HEK293 (cell line): ENCODE measurements at regions of chr3 and their contacts with region 1.

Region 1: GRCh38 chr3:172332256-172333041 is 115.8 kb downstream of the GHSR start:
- H3K4me3 ChIP-seq: no peak overlapping the region
- H3K27ac ChIP-seq: no peak overlapping the region
- H3K4me1 ChIP-seq: no peaks in the 10 kb centered on the region
- CTCF ChIP-seq: peak; percentile 32; the same call in 1 of the 2 replicates

Region 2: GRCh38 chr3:172307141-172307560 is 25.3 kb before region 1 on chr3:
- CTCF ChIA-PET with region 1: interaction called, 10 read pairs
- POLR2A ChIA-PET with region 1: no interaction called
- H3K4me3 ChIP-seq: no peak overlapping the region
- H3K27ac ChIP-seq: no peak overlapping the region
- H3K4me1 ChIP-seq: no peaks in the 10 kb centered on the region
- CTCF ChIP-seq: no peak

Region 3: DNA sequence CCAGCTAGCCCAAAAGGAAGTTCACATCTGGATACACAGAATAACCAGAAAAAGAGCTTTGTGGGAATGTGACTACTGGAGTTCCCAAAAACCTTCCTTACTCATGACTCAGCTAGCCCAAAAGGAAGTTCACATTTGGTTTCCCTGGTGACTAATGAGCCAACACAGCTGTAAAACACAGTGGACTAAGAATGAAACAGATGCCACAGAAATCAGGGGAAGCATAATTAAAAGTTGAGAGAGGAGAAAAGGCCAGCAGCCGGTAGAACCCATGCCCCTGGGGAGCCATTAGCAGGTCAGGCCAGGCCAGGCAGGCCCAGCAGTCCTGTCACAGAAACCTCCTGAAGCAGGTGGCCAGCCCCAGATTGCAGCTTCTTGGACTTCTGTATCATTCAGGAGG is 14.5 kb before region 1 on chr3:
- CTCF ChIA-PET with region 1: interaction called, 13 read pairs
- POLR2A ChIA-PET with region 1: no interaction called
- H3K4me3 ChIP-seq: no peak overlapping the region
- H3K27ac ChIP-seq: no peak overlapping the region
- H3K4me1 ChIP-seq: no peaks in the 10 kb centered on the region
- CTCF ChIP-seq: no peak

Region 4: DNA sequence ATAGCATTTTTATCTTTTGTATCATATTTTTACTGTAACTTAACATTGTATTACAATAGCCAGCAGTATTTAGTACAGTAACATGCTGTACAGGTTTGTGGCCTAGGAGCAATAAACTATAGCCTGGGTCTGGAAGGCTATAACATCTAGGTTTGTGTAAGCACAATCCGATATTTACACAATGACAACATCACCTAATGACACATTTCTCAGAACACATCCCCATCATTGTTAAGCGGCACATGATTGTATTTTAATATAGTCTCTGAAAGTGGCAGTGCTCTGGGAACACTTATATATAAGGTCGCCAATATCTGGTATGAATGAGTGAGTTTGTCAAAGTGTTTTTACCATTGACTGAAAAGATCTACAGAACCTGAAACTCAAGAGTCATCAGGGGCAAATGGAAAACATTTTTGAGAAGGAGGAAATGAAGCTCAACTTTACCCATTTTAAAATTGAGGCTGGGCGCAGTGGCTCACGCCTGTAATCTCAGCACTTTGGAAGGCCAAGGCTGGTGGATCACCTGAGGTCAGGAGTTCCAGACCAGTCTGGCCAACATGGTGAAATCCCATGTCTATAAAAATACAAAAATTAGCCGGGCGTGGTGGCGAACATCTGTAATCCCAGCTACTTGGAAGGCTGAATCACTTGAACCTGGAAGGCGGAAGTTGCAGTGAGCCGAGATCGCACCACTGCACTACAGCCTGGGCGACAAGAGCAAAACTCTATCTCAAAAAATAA is 229.6 kb after region 1 on chr3:
- CTCF ChIA-PET with region 1: no interaction called
- POLR2A ChIA-PET with region 1: no interaction called
- H3K4me3 ChIP-seq: no peak overlapping the region
- H3K27ac ChIP-seq: no peak overlapping the region
- H3K4me1 ChIP-seq: no peaks in the 10 kb centered on the region
- CTCF ChIP-seq: no peak

Region 5: DNA sequence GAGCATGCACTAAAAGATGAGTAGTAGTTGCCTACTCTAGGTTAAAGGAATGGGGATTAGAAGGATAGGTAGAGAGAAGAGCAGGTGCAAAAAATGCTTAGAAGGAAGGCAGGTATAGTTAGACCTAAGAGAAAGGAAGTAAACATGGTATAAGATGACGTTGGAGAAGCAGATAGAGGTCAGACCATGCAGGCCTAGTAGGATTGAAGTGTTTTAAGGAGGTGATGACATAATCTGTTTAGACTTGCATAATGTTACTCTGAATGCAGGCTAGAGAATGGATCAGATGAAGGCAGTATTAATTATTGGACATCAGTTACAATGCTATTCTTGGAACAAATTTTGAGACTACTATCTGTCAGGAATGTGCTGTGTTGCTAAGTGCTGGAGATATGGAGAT is 407.0 kb after region 1 on chr3:
- CTCF ChIA-PET with region 1: no interaction called
- POLR2A ChIA-PET with region 1: no interaction called
- H3K4me3 ChIP-seq: no peak overlapping the region
- H3K27ac ChIP-seq: no peak overlapping the region
- H3K4me1 ChIP-seq: no peaks in the 10 kb centered on the region
- CTCF ChIP-seq: no peak

Region 6: GRCh38 chr3:172904711-172905373 is 572.4 kb after region 1 on chr3:
- CTCF ChIA-PET with region 1: no interaction called
- POLR2A ChIA-PET with region 1: no interaction called
- H3K4me3 ChIP-seq: no peak overlapping the region
- H3K27ac ChIP-seq: no peak overlapping the region
- H3K4me1 ChIP-seq: no peaks in the 10 kb centered on the region
- CTCF ChIP-seq: no peak